ENCODE measurements at regions of chr2 and their contacts with region 1.

Region 1: DNA sequence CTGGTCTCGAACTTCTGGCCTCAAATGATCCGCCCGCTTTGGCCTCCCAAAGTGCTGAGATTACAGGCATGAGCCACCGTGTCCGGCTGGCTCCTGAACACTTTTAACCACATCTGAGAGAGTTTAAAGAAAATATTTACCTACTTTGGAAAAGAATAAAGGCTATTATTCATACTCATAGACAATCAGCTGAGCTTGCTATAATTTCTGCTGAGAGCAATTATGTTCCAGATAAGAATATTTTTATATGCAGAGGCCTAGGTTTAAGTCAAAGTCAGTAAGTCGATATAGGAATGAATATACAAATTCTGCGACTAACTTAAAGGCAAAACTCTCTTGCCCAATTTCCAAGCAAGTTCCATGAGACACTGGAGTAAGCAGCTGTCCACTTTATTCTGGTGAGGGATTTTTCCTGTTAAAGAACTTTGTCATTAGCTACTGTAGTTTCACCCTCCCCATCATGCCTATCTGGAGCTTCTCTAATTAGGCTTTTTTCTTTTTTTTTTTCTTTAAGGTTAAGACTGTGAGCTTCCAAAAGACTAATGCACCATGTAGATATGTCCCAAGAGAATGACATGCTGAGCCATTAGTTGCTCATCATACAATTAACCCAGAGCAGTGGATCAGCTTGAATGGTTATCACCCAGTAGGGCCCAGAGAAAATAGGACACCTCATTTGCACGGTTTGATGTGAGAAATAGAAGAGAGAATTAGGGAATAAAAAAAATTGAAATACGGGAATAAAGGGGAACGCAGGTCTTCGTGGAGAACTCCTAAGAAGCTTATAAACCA is 260.1 kb downstream of the KCNE4 start:
- DNase-seq: no peak
- ATAC-seq: no peak
- H3K4me3 ChIP-seq: no peak overlapping the region
- H3K27ac ChIP-seq: no peak overlapping the region
- H3K4me1 ChIP-seq: no peaks in the 10 kb centered on the region
- H3K27me3 ChIP-seq: no peaks in the 10 kb centered on the region
- CTCF ChIP-seq: no peak

Region 2: GRCh38 chr2:223369889-223370288 is 57.8 kb after region 1 on chr2:
- intact Hi-C with region 1: loop called in 1 of 2 experiments (anchors 2 kb)
- DNase-seq: no peak
- ATAC-seq: no peak
- H3K4me3 ChIP-seq: no peak overlapping the region
- H3K27ac ChIP-seq: no peak overlapping the region
- H3K4me1 ChIP-seq: no peaks in the 10 kb centered on the region
- H3K27me3 ChIP-seq: no peaks in the 10 kb centered on the region
- CTCF ChIP-seq: no peak

Region 3: DNA sequence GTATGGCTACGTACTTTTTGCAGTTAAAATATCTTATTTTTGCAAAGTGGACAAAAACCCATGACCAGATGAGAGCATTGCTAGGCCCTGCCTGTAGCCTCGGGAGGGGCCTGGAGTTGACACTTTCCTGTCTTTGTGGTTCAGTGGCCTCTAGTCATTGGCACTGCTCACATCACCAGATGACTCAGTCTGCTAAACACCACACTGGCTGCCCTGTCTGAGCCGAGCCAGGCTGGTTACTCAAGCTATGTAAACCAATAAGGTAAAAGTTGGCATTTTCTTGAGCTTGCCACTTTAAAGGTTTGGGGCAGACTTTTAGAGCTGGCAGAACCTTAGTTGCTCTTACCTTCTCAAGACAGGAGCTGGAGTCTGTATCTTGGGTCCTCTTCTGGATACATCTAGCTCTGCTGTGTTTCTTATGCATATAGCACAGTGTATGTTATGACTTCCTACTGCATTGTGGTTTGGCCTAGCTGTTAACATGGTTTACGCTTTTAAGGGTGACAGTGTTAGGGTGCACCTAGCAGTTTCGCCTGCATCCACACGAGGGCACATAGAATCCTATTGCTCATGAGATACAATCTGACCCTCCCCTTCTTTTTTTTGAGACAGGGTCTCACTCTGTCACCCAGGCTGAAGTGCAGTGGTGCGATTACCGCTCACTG is 448.9 kb after region 1 on chr2:
- intact Hi-C with region 1: no loop called
- DNase-seq: no peak
- ATAC-seq: no peak
- H3K4me3 ChIP-seq: no peak overlapping the region
- H3K27ac ChIP-seq: no peak overlapping the region
- H3K4me1 ChIP-seq: no peaks in the 10 kb centered on the region
- H3K27me3 ChIP-seq: no peaks in the 10 kb centered on the region
- CTCF ChIP-seq: no peak